K562 (cell line): ENCODE measurements at regions of chr11 and their contacts with region 1.

Region 1: GRCh38 chr11:46238967-46239800 is 38.3 kb upstream of the CREB3L1 start:
- DNase-seq: peak; percentile 78 to 92 (median 82)
- ATAC-seq: peak; percentile 75
- H3K4me3 ChIP-seq: peak overlapping the region; percentile 35
- H3K27ac ChIP-seq: peak overlapping the region; percentile 97
- H3K4me1 ChIP-seq: peaks cover 45 to 51% of the 10 kb centered on the region in 2 experiments
- H3K27me3 ChIP-seq: no peaks in the 10 kb centered on the region
- CTCF ChIP-seq: peak; percentile 95 to 96 (median 95)
- EP300 ChIP-seq: 0 out of 2 replicates have a peak, but pooled peaks have one; percentile 16
- POLR2A ChIP-seq: 0 out of 2 replicates have a peak, but pooled peaks have one; percentile 10
- RAD21 ChIP-seq: peak; percentile 92

Region 2: DNA sequence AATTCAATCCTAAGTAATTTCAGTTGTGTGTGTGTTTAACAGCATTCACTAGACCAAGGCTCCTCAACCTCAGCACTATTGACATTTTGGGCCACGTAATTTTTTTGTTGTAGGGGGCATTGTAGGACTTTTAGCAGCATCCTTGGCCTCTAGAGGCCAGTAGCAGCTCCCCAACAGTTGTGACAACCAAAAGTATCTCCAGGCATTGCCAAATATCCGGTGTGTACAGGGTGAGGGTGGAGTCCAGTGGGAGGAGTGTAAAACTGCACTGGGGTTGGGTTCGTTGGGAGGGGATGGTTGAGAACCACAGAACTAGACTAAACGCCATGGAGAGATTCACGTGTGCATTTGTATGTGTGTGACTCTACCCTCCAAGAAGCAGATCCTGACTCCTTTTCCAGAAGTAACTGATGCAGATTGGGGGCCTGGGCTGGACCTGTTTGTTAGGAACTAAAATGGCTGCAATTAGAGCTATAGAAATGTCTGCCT is 112.0 kb before region 1 on chr11:
- CTCF ChIA-PET with region 1: no interaction called
- POLR2A ChIA-PET with region 1: interaction called, 3 read pairs
- in situ Hi-C with region 1: no loop called
- intact Hi-C with region 1: loop called (anchors 1 kb)
- DNase-seq: peak; percentile 63 to 93 (median 78)
- ATAC-seq: peak; percentile 99
- H3K4me3 ChIP-seq: no peak overlapping the region
- H3K27ac ChIP-seq: peak overlapping the region; percentile 41
- H3K4me1 ChIP-seq: peaks cover under 1 to 18% of the 10 kb centered on the region in 2 experiments; a peak in 3 of 5 replicates
- H3K27me3 ChIP-seq: no peaks in the 10 kb centered on the region
- CTCF ChIP-seq: peak; percentile 87 to 95 (median 95)
- EP300 ChIP-seq: peak; percentile 72
- POLR2A ChIP-seq: peak; percentile 59; the same call in 1 of the 2 replicates
- RAD21 ChIP-seq: peak; percentile 59 to 73

Region 3: GRCh38 chr11:46256540-46257001 is 17.4 kb after region 1 on chr11:
- CTCF ChIA-PET with region 1: no interaction called
- POLR2A ChIA-PET with region 1: interaction called, 10 read pairs
- in situ Hi-C with region 1: no loop called
- intact Hi-C with region 1: no loop called
- DNase-seq: peak in 1 of 4 experiments; percentile 31
- ATAC-seq: no peak
- H3K4me3 ChIP-seq: no peak overlapping the region
- H3K27ac ChIP-seq: peak overlapping the region; percentile 66
- H3K4me1 ChIP-seq: peaks cover 22 to 32% of the 10 kb centered on the region in 2 experiments
- H3K27me3 ChIP-seq: no peaks in the 10 kb centered on the region
- CTCF ChIP-seq: no peak
- EP300 ChIP-seq: no peak
- POLR2A ChIP-seq: no peak
- RAD21 ChIP-seq: no peak

Region 4: GRCh38 chr11:46295312-46296058 is 56.3 kb after region 1 on chr11:
- CTCF ChIA-PET with region 1: interaction called, 3 read pairs
- POLR2A ChIA-PET with region 1: interaction called, 10 read pairs
- in situ Hi-C with region 1: no loop called
- intact Hi-C with region 1: loop called (anchors 2 kb)
- DNase-seq: peak; percentile 91 to 96 (median 96)
- ATAC-seq: peak; percentile 91
- H3K4me3 ChIP-seq: peak overlapping the region; percentile 48
- H3K27ac ChIP-seq: peak overlapping the region; percentile 85
- H3K4me1 ChIP-seq: peaks cover 34 to 55% of the 10 kb centered on the region in 2 experiments
- H3K27me3 ChIP-seq: no peaks in the 10 kb centered on the region
- CTCF ChIP-seq: no peak
- EP300 ChIP-seq: no peak
- POLR2A ChIP-seq: peak; percentile 78
- RAD21 ChIP-seq: no peak; a peak in 1 of 4 replicates

Region 5: DNA sequence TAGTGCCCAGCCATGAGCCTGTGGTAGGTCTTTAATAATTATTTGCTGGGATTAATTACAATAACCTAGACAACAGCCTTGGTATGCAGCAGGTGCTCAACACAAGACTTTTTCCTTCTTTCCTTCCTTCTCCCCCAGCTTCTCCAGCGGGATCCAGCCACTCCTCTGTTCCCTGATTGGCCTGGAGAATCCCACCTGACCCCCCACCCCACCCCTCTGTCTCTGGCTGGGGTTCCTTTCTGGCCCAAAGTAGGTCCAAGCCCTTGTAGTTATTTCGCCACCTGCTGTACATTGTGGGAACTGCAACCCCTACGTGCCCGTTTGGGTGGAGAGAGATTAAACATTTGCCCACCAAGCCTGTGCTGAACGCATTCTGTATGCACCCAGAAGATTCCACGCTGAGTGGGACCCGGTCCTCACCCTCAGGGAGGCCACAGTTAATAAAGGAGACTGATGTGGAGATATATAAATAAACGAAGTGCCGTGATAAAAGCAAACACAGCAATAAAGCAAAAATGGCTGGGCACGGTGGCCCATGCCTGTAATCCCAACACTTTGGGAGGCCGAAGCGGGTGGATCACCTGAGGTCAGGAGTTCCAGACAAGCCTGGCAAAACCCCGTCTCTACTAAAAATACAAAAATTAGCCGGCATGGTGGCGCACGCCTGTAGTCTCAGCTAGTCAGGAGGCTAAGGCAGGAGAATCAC is 76.0 kb after region 1 on chr11:
- CTCF ChIA-PET with region 1: interaction called, 19 read pairs
- POLR2A ChIA-PET with region 1: interaction called, 10 read pairs
- in situ Hi-C with region 1: loop called (anchors 10 kb)
- intact Hi-C with region 1: loop called (anchors 1 kb)
- DNase-seq: peak; percentile 86 to 95 (median 92)
- ATAC-seq: peak; percentile 87
- H3K4me3 ChIP-seq: no peak overlapping the region
- H3K27ac ChIP-seq: no peak overlapping the region
- H3K4me1 ChIP-seq: peaks cover 20 to 59% of the 10 kb centered on the region in 2 experiments
- H3K27me3 ChIP-seq: no peaks in the 10 kb centered on the region
- CTCF ChIP-seq: peak; percentile 81 to 94 (median 83)
- EP300 ChIP-seq: no peak
- POLR2A ChIP-seq: no peak
- RAD21 ChIP-seq: peak; percentile 58 to 73